ENCODE measurements at regions of chr3 and their contacts with region 1.

Region 1: DNA sequence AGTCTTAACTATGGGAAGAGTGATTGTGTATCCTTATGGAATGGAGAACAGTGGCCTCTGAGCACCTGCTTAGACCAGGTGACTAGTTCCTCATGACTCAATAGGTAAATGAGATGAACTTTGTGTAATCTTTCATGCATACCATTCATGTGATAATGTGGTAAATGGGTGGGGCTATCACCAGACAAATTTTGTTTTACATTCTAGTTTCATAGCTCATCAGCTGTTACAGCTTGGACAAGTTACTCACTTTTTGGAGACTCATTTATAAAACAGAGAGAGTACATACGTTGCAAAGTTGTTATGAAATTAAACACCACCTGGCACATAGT is 103.7 kb upstream of the TGFBR2 start:
- DNase-seq: no peak
- H3K4me3 Mint-ChIP-seq: no peak overlapping the region
- H3K27ac Mint-ChIP-seq: peak overlapping the region; percentile 42
- H3K4me1 Mint-ChIP-seq: peaks cover 24% of the 10 kb centered on the region
- H3K27me3 Mint-ChIP-seq: no peaks in the 10 kb centered on the region

Region 2: DNA sequence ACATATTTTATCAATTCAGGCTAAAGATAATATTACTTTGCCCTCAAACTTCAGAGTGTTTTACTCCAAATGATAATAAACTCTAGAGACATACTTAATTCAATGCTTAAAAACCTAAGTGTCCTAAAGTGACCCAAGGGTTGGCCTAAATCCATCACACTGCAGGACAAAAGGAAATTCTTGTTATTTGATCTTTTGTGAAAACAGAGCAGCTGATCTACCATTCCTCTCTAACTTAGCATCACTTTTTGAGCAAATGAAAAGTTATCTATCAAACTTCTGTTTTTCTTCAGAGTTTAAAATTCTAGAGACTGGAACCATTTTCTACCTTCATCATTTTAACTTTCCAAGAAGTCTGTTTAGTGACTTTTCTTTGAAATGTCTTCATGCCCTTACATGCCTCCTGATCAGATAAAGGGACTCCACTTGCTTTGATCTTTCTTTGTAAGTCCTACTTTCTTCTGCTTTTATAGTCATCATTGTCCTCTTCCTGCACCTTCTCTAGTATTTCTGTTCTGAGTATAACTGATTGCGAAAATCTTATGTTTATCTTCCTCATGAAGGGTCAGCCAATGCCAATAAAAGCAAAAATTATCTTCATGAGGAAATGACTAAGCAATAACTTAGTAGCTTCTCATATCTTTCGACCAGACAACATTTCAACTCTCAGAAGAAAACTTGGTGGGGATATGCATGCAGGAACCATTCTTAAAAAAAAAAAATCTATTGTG is 275.0 kb before region 1 on chr3:
- intact Hi-C with region 1: loop called (anchors 10 kb)
- DNase-seq: no peak
- H3K4me3 Mint-ChIP-seq: no peak overlapping the region
- H3K27ac Mint-ChIP-seq: peak overlapping the region; percentile 19
- H3K4me1 Mint-ChIP-seq: peaks cover 24% of the 10 kb centered on the region
- H3K27me3 Mint-ChIP-seq: no peaks in the 10 kb centered on the region

Region 3: DNA sequence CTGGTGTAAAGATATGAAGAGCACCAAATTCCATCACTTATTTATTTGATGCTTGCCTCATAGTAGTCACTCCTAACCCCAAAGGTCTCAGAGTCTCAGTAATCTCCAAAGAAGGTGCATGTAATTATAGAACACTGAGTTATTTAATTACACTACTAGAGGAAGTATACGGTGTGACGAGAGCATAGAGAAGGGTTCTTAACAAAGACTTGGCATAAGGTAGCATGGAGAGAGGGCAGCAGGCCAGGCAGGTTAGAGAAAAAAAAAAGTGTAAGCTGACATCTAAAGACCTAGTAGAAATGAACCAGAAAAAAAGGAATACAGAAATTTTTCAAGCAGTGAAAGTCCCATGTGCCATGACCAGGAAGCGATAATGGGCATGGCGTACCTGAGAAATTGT is 109.6 kb before region 1 on chr3:
- intact Hi-C with region 1: no loop called
- DNase-seq: no peak
- H3K4me3 Mint-ChIP-seq: no peak overlapping the region
- H3K27ac Mint-ChIP-seq: no peak overlapping the region
- H3K4me1 Mint-ChIP-seq: no peaks in the 10 kb centered on the region
- H3K27me3 Mint-ChIP-seq: peaks cover 1% of the 10 kb centered on the region

Region 4: DNA sequence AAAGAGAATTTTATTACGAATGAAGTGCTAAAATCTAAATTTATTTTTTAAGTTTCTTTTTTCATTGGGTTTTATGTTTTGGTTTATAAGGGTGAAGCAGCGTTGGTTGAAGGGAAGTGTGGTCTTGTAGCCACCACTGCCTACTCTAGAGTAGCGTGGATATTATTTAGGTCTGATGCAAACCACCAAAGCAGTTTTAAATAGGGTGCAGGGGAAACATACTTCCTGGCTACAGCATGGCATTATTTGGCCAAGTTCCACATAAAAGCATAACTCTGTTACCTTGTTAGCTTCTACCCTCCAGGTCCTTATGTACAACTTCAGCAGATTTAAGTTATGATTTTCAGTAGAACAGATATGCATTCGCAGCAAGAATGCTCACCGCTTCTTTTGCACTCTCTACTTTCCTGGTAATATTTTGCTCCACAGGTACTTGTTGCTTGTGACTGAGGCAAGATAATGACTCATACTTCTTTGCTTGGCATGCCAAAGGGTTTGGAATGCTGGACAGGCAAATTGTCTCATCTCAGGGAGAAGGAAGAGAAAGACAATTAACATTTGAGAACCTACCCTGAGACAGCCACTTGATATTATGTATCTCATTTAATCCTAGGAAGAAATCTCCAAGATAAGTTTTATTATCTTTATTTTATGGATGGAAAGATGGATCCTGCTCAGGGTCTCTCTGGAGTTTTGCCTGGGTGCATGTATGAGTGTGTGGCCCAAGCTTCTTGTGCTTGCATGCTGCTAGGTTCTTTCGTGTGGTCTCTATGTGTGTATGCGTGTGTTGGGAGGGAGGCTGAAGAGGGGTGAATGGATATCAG is 109.1 kb after region 1 on chr3:
- intact Hi-C with region 1: loop called (anchors 5 kb)
- DNase-seq: no peak
- H3K4me3 Mint-ChIP-seq: peak overlapping the region; percentile 68
- H3K27ac Mint-ChIP-seq: peak overlapping the region; percentile 77
- H3K4me1 Mint-ChIP-seq: peaks cover 75% of the 10 kb centered on the region
- H3K27me3 Mint-ChIP-seq: no peaks in the 10 kb centered on the region